Psoas muscle (tissue), 8 donors: ENCODE measurements at regions of chr5 and their contacts with region 1.

Region 1: GRCh38 chr5:134708301-134708700 is 30.0 kb upstream of the CAMLG start:
- DNase-seq: no peak
- ATAC-seq: no peak
- H3K4me3 ChIP-seq: no peak overlapping the region
- H3K27ac ChIP-seq: no peak overlapping the region
- H3K4me1 ChIP-seq: no peaks in the 10 kb centered on the region
- H3K27me3 ChIP-seq: no peaks in the 10 kb centered on the region
- CTCF ChIP-seq: no peak

Region 2: GRCh38 chr5:134662971-134663370 is 45.3 kb before region 1 on chr5:
- intact Hi-C with region 1: loop called in 1 of 2 experiments (anchors 5 kb)
- DNase-seq: no peak
- ATAC-seq: no peak
- H3K4me3 ChIP-seq: no peak overlapping the region
- H3K27ac ChIP-seq: no peak overlapping the region
- H3K4me1 ChIP-seq: no peaks in the 10 kb centered on the region
- H3K27me3 ChIP-seq: no peaks in the 10 kb centered on the region
- CTCF ChIP-seq: no peak

Region 3: GRCh38 chr5:134794082-134794481 is 85.8 kb after region 1 on chr5:
- intact Hi-C with region 1: loop called (anchors 10 kb)
- DNase-seq: no peak
- ATAC-seq: no peak
- H3K4me3 ChIP-seq: no peak overlapping the region
- H3K27ac ChIP-seq: no peak overlapping the region
- H3K4me1 ChIP-seq: no peaks in the 10 kb centered on the region
- H3K27me3 ChIP-seq: no peaks in the 10 kb centered on the region
- CTCF ChIP-seq: no peak